PC-9 (cell line): ENCODE measurements at regions of chr3 and their contacts with region 1.

Region 1: GRCh38 chr3:40317061-40317855 is 7.8 kb downstream of the EIF1B start:
- DNase-seq: peak in 1 of 2 experiments; percentile 17
- H3K4me3 ChIP-seq: no peak overlapping the region
- H3K27ac ChIP-seq: no peak overlapping the region
- H3K4me1 ChIP-seq: no peaks in the 10 kb centered on the region
- H3K27me3 ChIP-seq: no peaks in the 10 kb centered on the region
- CTCF ChIP-seq: peak; percentile 79

Region 2: DNA sequence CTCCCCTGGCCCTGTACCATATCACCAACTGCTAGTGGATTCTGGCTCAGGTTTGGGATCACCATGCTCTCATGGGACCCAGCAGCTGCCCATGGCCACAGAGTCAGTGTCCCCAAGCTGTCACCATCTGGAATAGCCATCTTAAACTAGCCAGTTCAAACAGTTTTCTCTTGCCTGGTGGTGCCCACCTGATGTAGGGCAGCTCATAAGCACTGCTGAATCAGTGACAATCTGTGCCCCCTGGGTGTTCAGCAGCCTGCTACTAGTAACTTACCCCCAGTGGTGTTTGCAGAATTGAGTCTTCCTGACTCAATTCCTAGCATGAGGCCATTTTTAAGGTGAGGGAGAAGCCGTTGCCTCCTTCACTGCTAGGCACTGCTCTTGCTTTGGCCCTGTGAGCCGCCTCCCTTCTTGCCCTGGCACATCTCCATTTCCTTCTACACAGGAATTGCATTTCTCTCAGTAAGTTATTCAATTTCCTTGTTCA is 902.8 kb before region 1 on chr3:
- CTCF ChIA-PET with region 1: no interaction called
- POLR2A ChIA-PET with region 1: no interaction called
- intact Hi-C with region 1: loop called (anchors 10 kb)
- DNase-seq: no peak
- H3K4me3 ChIP-seq: no peak overlapping the region
- H3K27ac ChIP-seq: peak overlapping the region; percentile 5; the same call in 1 of the 2 replicates
- H3K4me1 ChIP-seq: peaks cover 5% of the 10 kb centered on the region; the same call in 1 of the 2 replicates
- H3K27me3 ChIP-seq: no peaks in the 10 kb centered on the region
- CTCF ChIP-seq: no peak

Region 3: GRCh38 chr3:39447637-39448483 is 869.4 kb before region 1 on chr3:
- CTCF ChIA-PET with region 1: no interaction called
- POLR2A ChIA-PET with region 1: no interaction called
- intact Hi-C with region 1: loop called (anchors 2 kb)
- DNase-seq: peak; percentile 46 to 52
- H3K4me3 ChIP-seq: no peak overlapping the region
- H3K27ac ChIP-seq: no peak overlapping the region
- H3K4me1 ChIP-seq: no peaks in the 10 kb centered on the region
- H3K27me3 ChIP-seq: 0 out of 2 replicates have a peak, but pooled peaks cover 4% of the 10 kb centered on the region
- CTCF ChIP-seq: peak; percentile 87

Region 4: DNA sequence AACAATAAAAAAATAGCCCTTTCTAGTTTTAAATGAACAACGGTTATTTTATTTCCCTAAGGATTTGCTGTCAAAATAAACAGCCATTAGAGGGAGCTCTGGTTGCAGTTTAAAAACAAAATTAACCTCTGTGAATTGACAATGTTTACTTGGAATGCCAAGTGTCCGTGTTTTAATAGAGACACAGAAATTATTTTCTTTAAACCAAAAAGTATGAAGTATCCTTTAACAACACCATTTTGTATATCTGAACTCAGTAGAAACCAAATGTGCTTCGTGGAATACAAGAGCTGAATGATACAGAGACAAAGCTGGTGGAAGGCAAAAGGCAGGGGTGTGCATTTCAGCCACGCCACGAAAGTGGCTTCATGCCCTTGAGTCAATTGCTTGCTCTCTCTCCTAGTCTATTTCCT is 775.3 kb before region 1 on chr3:
- CTCF ChIA-PET with region 1: no interaction called
- POLR2A ChIA-PET with region 1: no interaction called
- intact Hi-C with region 1: loop called (anchors 5 kb)
- DNase-seq: no peak
- H3K4me3 ChIP-seq: no peak overlapping the region
- H3K27ac ChIP-seq: no peak overlapping the region
- H3K4me1 ChIP-seq: no peaks in the 10 kb centered on the region
- H3K27me3 ChIP-seq: no peaks in the 10 kb centered on the region
- CTCF ChIP-seq: peak; percentile 65

Region 5: DNA sequence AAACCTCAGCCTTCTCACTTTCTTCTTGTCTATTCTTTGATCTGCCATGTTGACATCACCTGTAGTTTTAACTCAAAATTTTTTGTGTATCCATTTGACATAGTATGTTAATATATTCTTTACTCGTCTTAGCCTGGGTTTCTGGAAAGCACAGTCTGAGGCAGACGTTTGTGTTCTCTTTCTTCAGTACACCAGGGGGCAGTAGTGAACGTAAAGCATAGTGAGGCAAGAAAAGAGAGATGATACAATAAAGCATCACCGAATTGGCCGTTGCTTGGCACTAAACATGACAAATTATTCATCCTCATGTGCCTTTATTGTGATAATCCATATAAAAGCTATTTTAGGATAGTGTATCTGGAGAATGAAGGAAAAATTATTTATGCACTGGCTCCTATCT is 648.8 kb before region 1 on chr3:
- CTCF ChIA-PET with region 1: no interaction called
- POLR2A ChIA-PET with region 1: no interaction called
- intact Hi-C with region 1: loop called (anchors 10 kb)
- DNase-seq: no peak
- H3K4me3 ChIP-seq: no peak overlapping the region
- H3K27ac ChIP-seq: no peak overlapping the region
- H3K4me1 ChIP-seq: no peaks in the 10 kb centered on the region
- H3K27me3 ChIP-seq: peaks cover 24% of the 10 kb centered on the region; the same call in 1 of the 2 replicates
- CTCF ChIP-seq: peak; percentile 66

Region 6: GRCh38 chr3:40191850-40192448 is 125.3 kb before region 1 on chr3:
- CTCF ChIA-PET with region 1: interaction called, 4 read pairs
- POLR2A ChIA-PET with region 1: no interaction called
- intact Hi-C with region 1: loop called (anchors 1 kb)
- DNase-seq: peak; percentile 39 to 56
- H3K4me3 ChIP-seq: no peak overlapping the region
- H3K27ac ChIP-seq: no peak overlapping the region
- H3K4me1 ChIP-seq: no peaks in the 10 kb centered on the region
- H3K27me3 ChIP-seq: no peaks in the 10 kb centered on the region
- CTCF ChIP-seq: peak; percentile 87

Region 7: GRCh38 chr3:42090973-42091731 is 1773.9 kb after region 1 on chr3 and contains the start of gene TRAK1:
- CTCF ChIA-PET with region 1: no interaction called
- POLR2A ChIA-PET with region 1: no interaction called
- intact Hi-C with region 1: loop called (anchors 10 kb)
- DNase-seq: no peak
- H3K4me3 ChIP-seq: no peak within 1 kb of the TSS
- H3K27ac ChIP-seq: no peak within 1 kb of the TSS
- H3K4me1 ChIP-seq: no peaks in the 10 kb centered on the region; the same call in 1 of the 2 replicates
- H3K27me3 ChIP-seq: no peaks in the 10 kb centered on the region
- CTCF ChIP-seq: no peak
- total RNA-seq, gene TRAK1: 43.4 and 46.8 TPM in 2 replicates